A549 (cell line): ENCODE measurements at regions of chr15 and their contacts with region 1.

Region 1: DNA sequence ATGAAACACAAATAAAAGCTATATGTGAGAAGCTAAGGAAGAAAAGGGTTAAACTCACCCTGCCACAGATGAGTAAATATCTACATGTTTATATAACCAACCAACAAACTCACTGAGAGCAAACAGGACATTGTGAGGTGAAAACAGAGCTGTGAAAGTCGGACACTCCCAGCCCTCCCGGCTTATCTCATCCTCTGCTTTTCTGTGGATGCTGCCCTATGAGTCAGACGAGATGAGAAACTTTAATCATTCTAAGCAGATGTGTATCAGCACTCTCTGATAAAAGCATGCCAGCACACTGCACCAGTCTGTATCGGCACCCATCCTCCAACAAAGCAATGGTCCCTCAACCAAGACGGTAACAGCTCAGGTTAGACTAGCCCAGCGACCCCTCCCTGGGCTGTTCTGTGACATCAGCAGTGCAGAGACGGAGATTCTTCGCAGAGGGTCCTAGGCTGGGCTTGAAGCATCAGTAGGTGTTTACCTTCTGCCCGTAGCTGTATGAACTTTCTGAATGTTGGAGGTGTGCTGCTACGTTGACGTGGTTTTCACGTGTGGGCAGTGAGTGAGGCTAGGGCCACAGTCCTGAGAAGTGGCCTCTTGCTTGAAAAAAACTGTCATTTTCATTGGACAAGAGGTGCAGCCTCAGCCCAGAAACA is 119.8 kb upstream of the ALDH1A3 start:
- DNase-seq: peak; percentile 92 to 93
- ATAC-seq: peak; percentile 94 to 96
- H3K4me3 ChIP-seq: peak overlapping the region; percentile 26; the same call in 2 of the 3 replicates
- H3K27ac ChIP-seq: peak overlapping the region; percentile 51 to 67
- H3K4me1 ChIP-seq: peaks cover 22% of the 10 kb centered on the region
- CTCF ChIP-seq: no peak
- EP300 ChIP-seq: peak in 1 of 2 experiments; percentile 22; a peak in 1 of 5 replicates
- POLR2A ChIP-seq: no peak
- RAD21 ChIP-seq: peak in 1 of 2 experiments; percentile 31; a peak in 4 of 5 replicates

Region 2: GRCh38 chr15:100635406-100636071 is 124.3 kb before region 1 on chr15:
- CTCF ChIA-PET with region 1: no interaction called
- POLR2A ChIA-PET with region 1: no interaction called
- DNase-seq: no peak
- ATAC-seq: no peak; a peak in 1 of 6 replicates
- H3K4me3 ChIP-seq: no peak overlapping the region
- H3K27ac ChIP-seq: no peak overlapping the region
- H3K4me1 ChIP-seq: no peaks in the 10 kb centered on the region
- CTCF ChIP-seq: no peak
- EP300 ChIP-seq: no peak
- POLR2A ChIP-seq: no peak
- RAD21 ChIP-seq: no peak

Region 3: GRCh38 chr15:100721770-100722550 is 37.9 kb before region 1 on chr15:
- CTCF ChIA-PET with region 1: interaction called, 5 read pairs
- POLR2A ChIA-PET with region 1: interaction called, 17 read pairs
- DNase-seq: peak; percentile 98
- ATAC-seq: peak; percentile 80 to 90
- H3K4me3 ChIP-seq: peak overlapping the region; percentile 19; the same call in 2 of the 3 replicates
- H3K27ac ChIP-seq: peak overlapping the region; percentile 80 to 81
- H3K4me1 ChIP-seq: peaks cover 43% of the 10 kb centered on the region
- CTCF ChIP-seq: no peak
- EP300 ChIP-seq: peak; percentile 63 to 80; a peak in 2 of 5 replicates
- POLR2A ChIP-seq: no peak
- RAD21 ChIP-seq: peak in 1 of 2 experiments; percentile 35; a peak in 2 of 5 replicates

Region 4: DNA sequence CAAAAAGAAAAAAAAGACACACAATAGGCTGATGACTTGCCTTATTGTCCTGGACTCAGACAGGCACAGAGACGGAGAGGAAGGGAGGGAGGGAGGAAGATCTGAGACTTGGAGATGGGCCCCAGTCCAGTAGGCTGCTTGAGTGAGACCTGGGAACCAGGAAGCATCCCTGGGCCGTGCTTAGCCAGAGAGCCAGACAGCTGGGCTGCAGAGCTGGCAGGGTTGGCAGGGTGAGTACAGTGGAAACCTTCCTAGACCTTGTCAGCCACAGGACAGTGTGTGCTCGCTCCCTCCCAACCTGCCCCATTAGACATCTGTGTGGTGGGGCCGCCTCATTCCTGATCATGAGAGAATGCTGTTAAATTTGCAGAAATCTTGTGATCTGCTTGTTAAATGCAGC is 11.9 kb after region 1 on chr15:
- CTCF ChIA-PET with region 1: interaction called, 17 read pairs
- POLR2A ChIA-PET with region 1: no interaction called
- DNase-seq: no peak
- ATAC-seq: peak; percentile 41 to 52; a peak in 5 of 6 replicates
- H3K4me3 ChIP-seq: no peak overlapping the region
- H3K27ac ChIP-seq: no peak overlapping the region
- H3K4me1 ChIP-seq: no peaks in the 10 kb centered on the region
- CTCF ChIP-seq: no peak
- EP300 ChIP-seq: no peak
- POLR2A ChIP-seq: no peak
- RAD21 ChIP-seq: no peak

Region 5: DNA sequence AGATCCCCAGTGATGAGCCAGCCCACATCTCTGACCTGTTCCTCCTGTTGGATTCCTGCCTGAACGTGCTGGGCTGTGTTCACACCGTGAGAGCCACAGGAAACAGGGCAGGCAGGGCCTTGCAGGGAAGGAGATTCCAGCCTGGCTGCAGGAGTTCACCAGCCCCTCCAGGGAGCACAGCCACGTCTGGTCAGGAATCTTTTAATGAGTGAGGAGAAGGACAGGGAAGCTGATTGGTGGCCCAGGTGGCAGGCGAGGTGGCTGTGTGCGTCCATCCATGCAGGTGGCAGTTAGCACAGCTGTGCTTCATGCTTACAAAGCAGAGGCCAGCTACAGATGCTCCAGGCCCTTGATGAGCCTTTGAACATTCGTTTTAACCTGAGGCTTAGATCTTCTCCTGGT is 169.8 kb after region 1 on chr15:
- CTCF ChIA-PET with region 1: no interaction called
- POLR2A ChIA-PET with region 1: no interaction called
- DNase-seq: no peak
- ATAC-seq: no peak; a peak in 2 of 6 replicates
- H3K4me3 ChIP-seq: no peak overlapping the region
- H3K27ac ChIP-seq: no peak overlapping the region
- H3K4me1 ChIP-seq: peaks cover 9% of the 10 kb centered on the region; the same call in 2 of the 3 replicates
- CTCF ChIP-seq: no peak
- EP300 ChIP-seq: no peak
- POLR2A ChIP-seq: no peak
- RAD21 ChIP-seq: no peak